Ovary (tissue), 10 donors: ENCODE measurements at regions of chr17 and their contacts with region 1.

Region 1: GRCh38 chr17:76103274-76104139 is at the start of gene EXOC7:
- DNase-seq: peak; percentile 90 to 96 (median 94)
- H3K4me3 ChIP-seq: peak within 1 kb of the TSS; percentile 75
- H3K27ac ChIP-seq: peak within 1 kb of the TSS; percentile 9 to 43
- H3K4me1 ChIP-seq: peaks cover 13% of the 10 kb centered on the region
- H3K27me3 ChIP-seq: no peaks in the 10 kb centered on the region
- CTCF ChIP-seq: no peak
- EP300 ChIP-seq: no peak
- POLR2A ChIP-seq: peak; percentile 48
- total RNA-seq, gene EXOC7: 46.9 to 121 (median 115) TPM

Region 2: DNA sequence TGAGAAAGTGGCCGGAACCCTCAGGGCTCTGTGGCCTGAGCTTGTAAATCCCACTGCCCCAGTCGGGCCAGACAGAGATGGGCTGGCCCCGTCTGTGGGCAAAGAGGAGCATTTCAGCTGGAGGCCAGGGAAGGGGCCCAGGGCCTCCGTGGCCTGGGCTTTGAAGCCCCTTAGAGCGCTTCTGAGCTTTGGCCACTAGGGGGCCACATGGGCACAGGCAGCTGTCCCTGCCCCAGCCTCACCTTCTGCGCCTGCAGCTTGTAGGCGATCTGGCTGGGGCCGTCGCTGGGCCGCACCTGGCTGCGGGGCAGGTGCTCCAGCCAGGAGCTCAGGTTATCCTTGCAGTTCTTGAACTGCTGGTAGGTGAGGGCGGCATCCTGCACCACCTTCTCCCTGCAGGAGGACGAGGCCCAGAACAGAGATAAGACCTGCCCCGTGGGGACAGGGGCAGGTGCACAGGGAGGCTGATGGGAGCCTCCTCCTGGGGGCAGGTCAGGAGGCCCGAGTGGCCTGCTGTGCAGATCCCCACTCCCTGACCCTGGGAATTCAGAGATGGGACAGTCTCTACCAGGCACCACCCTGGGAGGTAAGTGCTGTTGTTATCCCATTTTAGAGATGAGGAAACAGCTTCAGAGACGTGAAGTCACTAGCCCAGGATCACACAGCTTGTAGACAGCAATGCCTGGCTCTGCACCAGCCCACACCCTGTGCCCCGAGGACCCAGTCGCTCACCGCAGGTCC is 89.2 kb before region 1 on chr17:
- intact Hi-C with region 1: loop called in 1 of 4 experiments (anchors 5 kb)
- DNase-seq: peak; percentile 70 to 80 (median 74)
- H3K4me3 ChIP-seq: no peak overlapping the region
- H3K27ac ChIP-seq: no peak overlapping the region
- H3K4me1 ChIP-seq: no peaks in the 10 kb centered on the region
- H3K27me3 ChIP-seq: no peaks in the 10 kb centered on the region
- CTCF ChIP-seq: peak; percentile 87 to 91 (median 87)
- EP300 ChIP-seq: no peak
- POLR2A ChIP-seq: no peak

Region 3: GRCh38 chr17:76088036-76088867 is 15.3 kb before region 1 on chr17:
- intact Hi-C with region 1: no loop called
- DNase-seq: no peak
- H3K4me3 ChIP-seq: no peak overlapping the region
- H3K27ac ChIP-seq: no peak overlapping the region
- H3K4me1 ChIP-seq: no peaks in the 10 kb centered on the region
- H3K27me3 ChIP-seq: no peaks in the 10 kb centered on the region
- CTCF ChIP-seq: no peak
- EP300 ChIP-seq: no peak
- POLR2A ChIP-seq: no peak

Region 4: GRCh38 chr17:76121932-76122430 is 18.5 kb after region 1 on chr17:
- intact Hi-C with region 1: no loop called
- DNase-seq: peak in 2 of 5 donors; percentile 45 to 48
- H3K4me3 ChIP-seq: peak overlapping the region; percentile 19
- H3K27ac ChIP-seq: no peak overlapping the region
- H3K4me1 ChIP-seq: peaks cover 2% of the 10 kb centered on the region
- H3K27me3 ChIP-seq: no peaks in the 10 kb centered on the region
- CTCF ChIP-seq: no peak
- EP300 ChIP-seq: no peak
- POLR2A ChIP-seq: no peak

Region 5: GRCh38 chr17:76141212-76142038 is 37.9 kb after region 1 on chr17 and contains the start of gene FOXJ1:
- intact Hi-C with region 1: no loop called
- DNase-seq: peak; percentile 80 to 93 (median 89)
- H3K4me3 ChIP-seq: peak within 1 kb of the TSS; percentile 36
- H3K27ac ChIP-seq: no peak within 1 kb of the TSS
- H3K4me1 ChIP-seq: peaks cover 4% of the 10 kb centered on the region
- H3K27me3 ChIP-seq: peaks cover 2% of the 10 kb centered on the region
- CTCF ChIP-seq: no peak
- EP300 ChIP-seq: no peak
- POLR2A ChIP-seq: no peak
- total RNA-seq, gene FOXJ1: 0.28 to 168 (median 6.9) TPM in 6 of 7 donors, not detected in the other